ENCODE measurements at regions of chr12 and their contacts with region 1.

Region 1: GRCh38 chr12:64696080-64696741 is 63.0 kb downstream of the GNS start:
- DNase-seq: no peak
- H3K4me3 ChIP-seq: no peak overlapping the region
- H3K4me3 Mint-ChIP-seq: peak overlapping the region in 6 of 8 donors; percentile 18 to 52 (median 28)
- H3K27ac ChIP-seq: peak overlapping the region; percentile 20
- H3K27ac Mint-ChIP-seq: peak overlapping the region; percentile 65 to 92 (median 83)
- H3K4me1 ChIP-seq: peaks cover 84% of the 10 kb centered on the region
- H3K4me1 Mint-ChIP-seq: peaks cover 60 to 83% (median 73%) of the 10 kb centered on the region in 4 donors
- H3K27me3 ChIP-seq: no peaks in the 10 kb centered on the region
- H3K27me3 Mint-ChIP-seq: no peaks in the 10 kb centered on the region

Region 2: DNA sequence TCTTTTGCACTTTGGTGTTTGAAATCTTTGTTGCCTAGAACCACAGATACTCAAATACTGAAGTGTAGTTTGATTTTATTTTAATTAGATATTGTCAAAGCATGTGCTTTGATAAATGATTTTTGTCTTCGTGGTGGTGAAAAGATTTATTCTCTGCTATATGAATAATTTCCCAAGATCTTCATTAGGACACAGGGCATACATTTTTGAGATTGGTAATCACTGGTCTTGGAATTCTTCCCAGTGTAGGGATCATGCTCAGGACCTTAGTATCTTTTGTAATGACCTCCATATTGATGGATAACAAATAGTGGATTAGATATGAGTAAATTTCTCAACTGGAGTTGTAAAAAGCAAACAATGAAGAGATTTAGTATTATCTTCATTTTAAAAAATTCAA is 216.1 kb before region 1 on chr12:
- CTCF ChIA-PET with region 1: no interaction called
- POLR2A ChIA-PET with region 1: no interaction called
- intact Hi-C with region 1: no loop called
- DNase-seq: no peak
- H3K4me3 ChIP-seq: no peak overlapping the region
- H3K4me3 Mint-ChIP-seq: no peak overlapping the region
- H3K27ac ChIP-seq: no peak overlapping the region
- H3K27ac Mint-ChIP-seq: peak overlapping the region in 1 of 7 donors; percentile 3
- H3K4me1 ChIP-seq: no peaks in the 10 kb centered on the region
- H3K4me1 Mint-ChIP-seq: peaks cover 6 to 8% (median 7%) of the 10 kb centered on the region in 4 donors
- H3K27me3 ChIP-seq: no peaks in the 10 kb centered on the region
- H3K27me3 Mint-ChIP-seq: no peaks in the 10 kb centered on the region

Region 3: DNA sequence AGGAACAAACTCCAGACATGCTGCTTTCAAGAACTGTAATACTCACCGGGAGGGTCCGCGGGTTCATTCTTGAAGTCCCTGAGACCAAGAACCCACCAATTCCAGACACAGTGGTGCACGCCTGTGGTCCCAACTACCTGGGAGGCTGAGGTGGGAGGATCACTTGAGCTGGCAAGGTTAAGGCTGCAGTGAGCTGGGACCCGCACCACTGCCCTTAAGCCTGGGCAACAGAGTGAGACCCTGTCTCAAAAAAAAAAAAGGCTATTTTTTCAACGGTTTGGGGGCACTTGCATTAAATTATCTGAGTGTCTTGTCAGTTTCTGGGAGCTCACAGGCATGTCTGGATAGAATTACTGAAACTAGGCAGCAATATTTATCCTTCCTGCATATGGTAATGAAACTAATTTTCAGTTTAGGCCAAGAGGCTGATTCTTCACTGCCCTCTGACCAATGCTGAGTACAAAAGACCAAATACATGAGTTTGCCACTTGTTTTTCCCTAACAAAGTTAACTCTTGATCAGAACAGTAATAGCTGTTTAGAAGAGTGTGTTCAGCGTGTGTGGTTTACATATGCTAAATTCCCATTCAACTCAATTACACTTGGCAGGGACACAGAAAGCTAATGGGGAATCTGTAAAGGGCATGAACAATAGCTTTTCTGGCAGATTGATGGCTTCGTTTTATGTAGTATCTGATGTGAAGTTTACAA is 151.7 kb before region 1 on chr12:
- CTCF ChIA-PET with region 1: interaction called, 252 read pairs
- POLR2A ChIA-PET with region 1: interaction called, 20 read pairs
- intact Hi-C with region 1: loop called (anchors 1 kb)
- DNase-seq: no peak
- H3K4me3 ChIP-seq: no peak overlapping the region
- H3K4me3 Mint-ChIP-seq: no peak overlapping the region
- H3K27ac ChIP-seq: no peak overlapping the region
- H3K27ac Mint-ChIP-seq: no peak overlapping the region
- H3K4me1 ChIP-seq: peaks cover 2% of the 10 kb centered on the region
- H3K4me1 Mint-ChIP-seq: peaks cover 0 to 3% (median 2%) of the 10 kb centered on the region in 4 donors
- H3K27me3 ChIP-seq: no peaks in the 10 kb centered on the region
- H3K27me3 Mint-ChIP-seq: peaks cover 6 to 8% of the 10 kb centered on the region in 2 donors

Region 4: GRCh38 chr12:64560396-64561304 is 135.6 kb before region 1 on chr12:
- CTCF ChIA-PET with region 1: interaction called, 19 read pairs
- POLR2A ChIA-PET with region 1: no interaction called
- intact Hi-C with region 1: no loop called
- DNase-seq: no peak
- H3K4me3 ChIP-seq: no peak overlapping the region
- H3K4me3 Mint-ChIP-seq: no peak overlapping the region
- H3K27ac ChIP-seq: no peak overlapping the region
- H3K27ac Mint-ChIP-seq: peak overlapping the region in 1 of 7 donors; percentile 44
- H3K4me1 ChIP-seq: no peaks in the 10 kb centered on the region
- H3K4me1 Mint-ChIP-seq: peaks cover 0 to 8% (median 8%) of the 10 kb centered on the region in 4 donors
- H3K27me3 ChIP-seq: no peaks in the 10 kb centered on the region
- H3K27me3 Mint-ChIP-seq: peaks cover 0 to 2% of the 10 kb centered on the region in 2 donors

Region 5: GRCh38 chr12:64618953-64619590 is 77.1 kb before region 1 on chr12:
- CTCF ChIA-PET with region 1: interaction called, 13 read pairs
- POLR2A ChIA-PET with region 1: interaction called, 202 read pairs
- intact Hi-C with region 1: no loop called
- DNase-seq: no peak
- H3K4me3 ChIP-seq: no peak overlapping the region
- H3K4me3 Mint-ChIP-seq: peak overlapping the region; percentile 31 to 75 (median 62)
- H3K27ac ChIP-seq: no peak overlapping the region
- H3K27ac Mint-ChIP-seq: peak overlapping the region; percentile 58 to 88 (median 73)
- H3K4me1 ChIP-seq: peaks cover 96% of the 10 kb centered on the region
- H3K4me1 Mint-ChIP-seq: peaks cover 49 to 89% (median 66%) of the 10 kb centered on the region in 4 donors
- H3K27me3 ChIP-seq: no peaks in the 10 kb centered on the region
- H3K27me3 Mint-ChIP-seq: no peaks in the 10 kb centered on the region

Region 6: GRCh38 chr12:64660237-64661018 is 35.8 kb before region 1 on chr12:
- CTCF ChIA-PET with region 1: interaction called, 22 read pairs
- POLR2A ChIA-PET with region 1: interaction called, 139 read pairs
- intact Hi-C with region 1: no loop called
- DNase-seq: no peak
- H3K4me3 ChIP-seq: no peak overlapping the region
- H3K4me3 Mint-ChIP-seq: peak overlapping the region in 7 of 8 donors; percentile 29 to 76 (median 46)
- H3K27ac ChIP-seq: peak overlapping the region; percentile 43
- H3K27ac Mint-ChIP-seq: peak overlapping the region; percentile 70 to 94 (median 87)
- H3K4me1 ChIP-seq: peaks cover 99% of the 10 kb centered on the region
- H3K4me1 Mint-ChIP-seq: peaks cover 65 to 96% (median 83%) of the 10 kb centered on the region in 4 donors
- H3K27me3 ChIP-seq: no peaks in the 10 kb centered on the region
- H3K27me3 Mint-ChIP-seq: no peaks in the 10 kb centered on the region

Region 7: DNA sequence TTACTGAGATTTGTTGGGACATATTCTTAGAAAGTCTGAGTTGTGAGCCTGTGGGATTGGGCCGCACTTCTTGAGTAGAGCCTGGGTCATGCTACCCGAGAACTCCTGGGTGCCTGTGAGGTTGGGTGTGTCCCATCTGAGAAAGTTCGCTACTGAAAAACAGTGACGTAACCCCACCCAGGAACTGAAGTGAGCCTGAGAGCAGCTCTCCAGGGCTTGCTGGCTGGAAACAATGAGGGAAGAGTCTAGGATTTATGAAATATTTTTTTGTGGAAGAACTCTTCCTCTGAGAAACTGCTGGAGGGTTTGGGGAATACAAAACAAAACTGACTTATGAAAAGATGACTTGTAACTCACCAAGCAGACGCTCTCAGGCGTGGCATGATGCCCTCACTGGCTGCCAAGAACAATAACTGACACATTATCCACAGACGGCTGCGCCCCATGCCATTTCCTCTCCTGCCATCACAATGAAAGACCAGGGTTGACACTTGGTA is 16.7 kb before region 1 on chr12:
- CTCF ChIA-PET with region 1: interaction called, 22 read pairs
- POLR2A ChIA-PET with region 1: interaction called, 231 read pairs
- intact Hi-C with region 1: loop called (anchors 1 kb)
- DNase-seq: peak; percentile 73 to 86 (median 80)
- H3K4me3 ChIP-seq: peak overlapping the region in 1 of 2 donors; percentile 36
- H3K4me3 Mint-ChIP-seq: peak overlapping the region; percentile 76 to 85 (median 79)
- H3K27ac ChIP-seq: peak overlapping the region; percentile 75
- H3K27ac Mint-ChIP-seq: peak overlapping the region; percentile 94 to 98 (median 97)
- H3K4me1 ChIP-seq: peaks cover 99% of the 10 kb centered on the region
- H3K4me1 Mint-ChIP-seq: peaks cover 67 to 100% (median 86%) of the 10 kb centered on the region in 4 donors
- H3K27me3 ChIP-seq: no peaks in the 10 kb centered on the region
- H3K27me3 Mint-ChIP-seq: no peaks in the 10 kb centered on the region

Region 8: GRCh38 chr12:64756376-64756775 is 60.2 kb after region 1 on chr12:
- CTCF ChIA-PET with region 1: no interaction called
- POLR2A ChIA-PET with region 1: no interaction called
- intact Hi-C with region 1: no loop called
- DNase-seq: no peak
- H3K4me3 ChIP-seq: no peak overlapping the region
- H3K4me3 Mint-ChIP-seq: peak overlapping the region in 1 of 8 donors; percentile 17
- H3K27ac ChIP-seq: no peak overlapping the region
- H3K27ac Mint-ChIP-seq: peak overlapping the region in 5 of 7 donors; percentile 0 to 93 (median 48)
- H3K4me1 ChIP-seq: peaks cover 51% of the 10 kb centered on the region
- H3K4me1 Mint-ChIP-seq: peaks cover 41 to 69% (median 54%) of the 10 kb centered on the region in 4 donors
- H3K27me3 ChIP-seq: no peaks in the 10 kb centered on the region
- H3K27me3 Mint-ChIP-seq: no peaks in the 10 kb centered on the region